Right ventricle myocardium superior (tissue), 1 donor: ENCODE measurements at regions of chr2 and their contacts with region 1.

Region 1: GRCh38 chr2:189762551-189763298 is at the start of gene OSGEPL1:
- DNase-seq: peak; percentile 97
- ATAC-seq: peak; percentile 98
- total RNA-seq, gene OSGEPL1: 9.4 TPM

Region 2: GRCh38 chr2:189674374-189675112 is 88.2 kb before region 1 on chr2 and contains the start of gene ANKAR:
- intact Hi-C with region 1: loop called (anchors 10 kb)
- DNase-seq: peak; percentile 95
- ATAC-seq: peak; percentile 99
- total RNA-seq, gene ANKAR: 8.1 TPM

Region 3: DNA sequence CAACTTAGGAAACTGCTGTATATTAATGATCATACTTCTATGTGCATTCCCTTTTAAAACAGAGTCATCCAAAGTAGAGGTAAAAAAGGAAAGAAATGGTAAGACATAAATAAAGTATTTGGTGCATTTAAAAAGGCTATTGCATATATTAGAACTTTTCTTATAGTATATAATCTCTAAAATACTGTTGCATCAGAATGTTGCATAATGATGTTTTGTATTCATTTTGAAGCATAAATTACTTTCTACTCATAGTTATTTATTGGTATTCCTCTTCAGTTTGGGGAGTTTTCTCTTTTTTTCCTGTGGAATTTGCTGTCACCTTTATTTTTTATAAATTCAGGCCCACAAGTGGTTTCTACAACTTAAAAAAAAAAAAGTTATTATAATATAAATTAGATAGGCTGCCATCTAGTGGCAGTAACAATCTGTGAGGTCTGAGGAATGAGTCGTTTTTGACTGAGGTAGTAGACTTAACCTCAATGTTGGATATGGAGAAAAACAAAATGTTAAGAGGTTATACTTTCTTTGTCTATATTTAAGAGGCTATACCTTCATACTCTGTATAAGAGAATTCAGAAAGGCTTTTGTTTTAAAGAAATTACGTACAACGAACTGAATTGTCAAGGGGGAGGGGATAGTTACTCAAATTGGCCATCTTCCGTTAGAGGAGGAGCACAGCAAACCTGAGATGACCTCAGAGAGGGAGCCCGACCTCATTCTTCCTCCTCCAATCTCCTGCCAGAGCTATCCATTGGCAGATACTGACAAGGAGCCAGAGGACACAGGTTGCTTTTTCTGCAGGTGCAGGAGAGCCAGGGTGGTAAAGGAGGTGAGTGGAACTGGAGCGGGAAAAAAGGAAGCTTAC is 64.5 kb before region 1 on chr2:
- intact Hi-C with region 1: no loop called
- DNase-seq: no peak
- ATAC-seq: peak; percentile 71

Region 4: GRCh38 chr2:189848276-189848675 is 85.6 kb after region 1 on chr2:
- intact Hi-C with region 1: no loop called
- DNase-seq: no peak
- ATAC-seq: no peak

Region 5: DNA sequence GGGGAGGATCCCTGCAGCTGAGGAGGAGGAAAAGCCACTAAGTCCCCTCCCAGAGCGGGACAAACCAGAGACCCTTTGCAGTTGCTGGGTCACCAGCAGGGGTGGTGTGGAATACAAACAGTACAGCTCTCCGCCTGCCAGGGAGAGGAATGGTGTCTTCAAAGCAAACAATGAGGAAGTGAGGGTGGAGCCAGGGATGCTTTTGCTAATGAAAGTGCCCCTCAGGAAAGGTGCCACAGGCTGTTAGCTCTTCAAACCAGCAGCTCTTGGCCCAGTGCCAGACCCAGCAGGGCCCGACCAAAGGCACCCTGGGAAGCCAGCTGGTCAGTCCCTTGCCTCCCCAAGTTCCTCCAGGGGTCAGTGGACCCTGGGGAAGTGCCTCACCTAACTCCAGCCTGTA is 454.1 kb after region 1 on chr2:
- intact Hi-C with region 1: no loop called
- DNase-seq: peak; percentile 55
- ATAC-seq: no peak

Region 6: GRCh38 chr2:190791347-190791975 is 1028.7 kb after region 1 on chr2:
- intact Hi-C with region 1: no loop called
- DNase-seq: peak; percentile 44
- ATAC-seq: no peak